Heart left ventricle (tissue), 16 donors: ENCODE measurements at regions of chr3 and their contacts with region 1.

Region 1: DNA sequence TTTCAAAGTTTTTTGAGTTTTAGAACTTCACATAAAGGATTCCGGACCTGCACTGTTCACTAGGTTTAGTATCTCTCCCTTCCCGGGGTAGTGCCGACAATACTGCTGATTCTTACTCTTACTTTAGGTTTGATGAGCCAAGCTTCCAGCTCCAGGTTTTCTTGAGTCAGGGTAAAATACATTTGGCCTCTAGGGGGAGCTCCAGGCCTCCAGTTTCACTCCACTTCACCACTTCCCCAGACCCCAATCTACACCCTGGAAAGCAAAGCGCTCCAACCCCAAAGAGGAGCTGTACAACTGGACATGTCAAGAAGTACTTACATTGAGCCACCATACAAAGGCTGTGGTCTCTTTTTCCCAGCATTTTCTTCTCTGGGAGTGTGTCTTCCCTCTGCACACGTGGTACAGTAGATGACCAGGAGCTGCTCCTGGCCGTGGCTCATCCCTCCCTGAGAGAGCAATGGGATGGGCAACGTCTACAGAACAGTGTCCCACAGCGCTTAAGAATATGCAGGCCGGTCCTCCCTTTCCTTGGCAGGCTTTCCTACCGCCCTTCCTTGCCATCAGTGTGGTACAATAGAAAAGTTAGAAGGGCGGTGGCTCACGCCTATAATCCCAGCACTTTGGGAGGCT is 93.9 kb upstream of the CCDC80 start:
- DNase-seq: peak; percentile 35 to 51 (median 48)
- ATAC-seq: peak in 3 of 4 donors; percentile 51 to 76 (median 69)
- H3K4me3 ChIP-seq: no peak overlapping the region
- H3K27ac ChIP-seq: no peak overlapping the region
- H3K4me1 ChIP-seq: peaks cover 0 to 18% (median 0%) of the 10 kb centered on the region in 12 donors
- H3K27me3 ChIP-seq: no peaks in the 10 kb centered on the region
- CTCF ChIP-seq: peak; percentile 50 to 74 (median 62)
- POLR2A ChIP-seq: no peak

Region 2: DNA sequence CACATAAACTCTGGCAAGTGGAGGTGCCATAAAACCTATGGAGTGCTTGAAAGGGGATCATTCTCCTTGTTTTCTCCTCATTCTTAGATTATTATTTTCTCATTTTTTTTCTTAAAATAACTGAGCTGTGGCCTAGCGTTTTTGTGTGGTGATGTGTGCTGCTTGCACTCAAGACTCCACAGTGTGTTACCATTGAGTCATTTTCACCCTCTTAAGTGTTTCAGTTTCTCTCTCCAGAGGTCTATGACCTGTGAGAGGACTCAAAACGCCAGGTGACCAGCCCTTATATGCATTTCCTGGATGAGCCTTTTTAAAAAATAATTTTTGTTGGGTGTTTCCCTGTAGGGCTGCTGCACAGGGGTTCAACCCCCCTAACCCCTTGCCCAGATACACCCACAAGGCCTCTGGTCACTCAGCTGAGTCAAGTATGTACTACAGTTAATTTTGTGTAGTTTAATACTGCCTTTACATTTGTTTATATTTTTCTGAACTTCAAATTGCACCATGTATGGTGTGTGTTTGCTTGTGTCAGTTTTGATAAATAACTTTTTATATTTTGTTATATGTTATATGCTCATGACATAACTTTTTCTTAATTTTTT is 220.2 kb before region 1 on chr3:
- intact Hi-C with region 1: no loop called
- DNase-seq: no peak
- ATAC-seq: no peak
- H3K4me3 ChIP-seq: no peak overlapping the region
- H3K27ac ChIP-seq: no peak overlapping the region
- H3K4me1 ChIP-seq: peaks cover 0 to 8% (median 0%) of the 10 kb centered on the region in 12 donors
- H3K27me3 ChIP-seq: no peaks in the 10 kb centered on the region
- CTCF ChIP-seq: no peak
- POLR2A ChIP-seq: no peak

Region 3: GRCh38 chr3:112979240-112979832 is 244.5 kb after region 1 on chr3:
- intact Hi-C with region 1: loop called in 9 of 10 experiments (anchors 5 to 10 kb)
- DNase-seq: no peak
- ATAC-seq: no peak
- H3K4me3 ChIP-seq: no peak overlapping the region
- H3K27ac ChIP-seq: no peak overlapping the region
- H3K4me1 ChIP-seq: peaks cover 0 to 28% (median 0%) of the 10 kb centered on the region in 12 donors
- H3K27me3 ChIP-seq: no peaks in the 10 kb centered on the region
- CTCF ChIP-seq: peak; percentile 66 to 82 (median 73)
- POLR2A ChIP-seq: no peak

Region 4: DNA sequence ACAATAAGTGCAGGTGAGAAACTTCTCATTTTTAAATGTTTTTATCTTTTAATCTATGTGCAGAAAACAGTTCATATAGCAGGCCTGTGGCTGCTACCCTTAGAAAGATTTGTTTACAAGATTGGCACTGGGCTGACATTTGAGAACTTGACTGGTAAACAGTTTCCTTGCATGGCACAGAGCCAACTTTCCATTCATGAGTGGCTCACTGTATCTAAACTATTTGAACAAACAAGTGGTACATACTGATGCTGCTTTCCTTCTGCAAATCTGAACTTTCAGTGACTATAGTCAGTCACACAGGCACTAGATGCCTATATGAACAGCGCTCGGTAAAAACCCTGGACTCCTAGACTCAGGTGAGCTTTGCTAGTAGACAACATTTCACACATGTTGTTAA is 249.7 kb after region 1 on chr3:
- intact Hi-C with region 1: loop called in 9 of 10 experiments (anchors 5 to 10 kb)
- DNase-seq: no peak
- ATAC-seq: peak in 2 of 4 donors; percentile 28 to 47
- H3K4me3 ChIP-seq: no peak overlapping the region
- H3K27ac ChIP-seq: no peak overlapping the region
- H3K4me1 ChIP-seq: peaks cover 0 to 13% (median 2%) of the 10 kb centered on the region in 12 donors
- H3K27me3 ChIP-seq: no peaks in the 10 kb centered on the region
- CTCF ChIP-seq: no peak
- POLR2A ChIP-seq: no peak